Tibial artery (tissue), 4 donors: ENCODE measurements at regions of chr18 and their contacts with region 1.

Region 1: DNA sequence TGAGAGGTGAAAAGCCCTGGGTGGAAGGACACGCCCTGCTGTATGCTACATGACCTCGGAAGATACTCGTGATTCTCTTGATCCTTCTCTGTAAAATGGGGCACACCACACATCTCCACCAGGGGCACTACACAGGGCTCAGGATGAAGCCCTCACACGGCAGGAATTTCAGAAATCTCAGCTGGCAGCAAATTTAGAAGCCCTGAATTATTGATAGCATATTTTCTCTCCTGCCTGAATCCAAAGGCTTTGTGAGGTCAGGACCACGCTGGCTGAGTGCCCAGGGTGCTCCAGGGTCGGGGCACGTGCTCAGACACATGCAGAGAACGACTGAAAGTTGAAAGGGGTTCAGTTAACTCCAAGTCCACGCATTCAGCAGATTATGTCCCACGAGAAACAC is 42.1 kb upstream of the GALR1 start:
- DNase-seq: peak; percentile 66 to 80
- H3K4me3 ChIP-seq: no peak overlapping the region
- H3K27ac ChIP-seq: peak overlapping the region; percentile 71 to 81
- H3K4me1 ChIP-seq: peaks cover 4 to 45% (median 18%) of the 10 kb centered on the region in 4 donors
- H3K27me3 ChIP-seq: no peaks in the 10 kb centered on the region
- CTCF ChIP-seq: peak; percentile 40 to 52

Region 2: DNA sequence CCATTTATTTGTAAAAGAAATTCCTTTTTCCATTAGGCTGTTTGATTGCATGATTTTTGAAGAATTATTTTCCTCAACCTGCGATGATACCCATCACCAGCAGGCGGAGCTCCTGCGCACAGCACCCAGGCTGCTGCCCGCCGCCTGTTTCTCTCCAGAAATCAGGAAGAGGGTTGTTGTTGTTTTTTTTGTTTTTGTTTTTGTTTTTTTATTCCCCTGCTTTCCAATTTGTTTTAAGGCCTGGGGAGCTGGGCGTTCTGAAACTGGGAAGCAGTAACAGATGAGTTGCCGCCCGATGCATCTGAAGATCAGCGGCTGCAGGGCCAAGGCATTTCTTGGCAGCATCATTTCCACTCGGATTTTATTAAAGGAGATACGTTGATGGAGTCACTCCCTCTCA is 207.0 kb before region 1 on chr18:
- intact Hi-C with region 1: loop called (anchors 5 kb)
- DNase-seq: no peak
- H3K4me3 ChIP-seq: peak overlapping the region in 1 of 2 donors; percentile 27
- H3K27ac ChIP-seq: no peak overlapping the region
- H3K4me1 ChIP-seq: peaks cover 0 to 6% (median 0%) of the 10 kb centered on the region in 4 donors
- H3K27me3 ChIP-seq: no peaks in the 10 kb centered on the region
- CTCF ChIP-seq: peak; percentile 90 to 97

Region 3: GRCh38 chr18:77132371-77133050 is 75.0 kb before region 1 on chr18 and contains the start of gene MBP:
- intact Hi-C with region 1: loop called (anchors 5 kb)
- DNase-seq: peak in 1 of 2 donors; percentile 83
- H3K4me3 ChIP-seq: peak within 1 kb of the TSS; percentile 69 to 91
- H3K27ac ChIP-seq: peak within 1 kb of the TSS; percentile 90 to 98
- H3K4me1 ChIP-seq: peaks cover 0 to 48% (median 23%) of the 10 kb centered on the region in 4 donors
- H3K27me3 ChIP-seq: no peaks in the 10 kb centered on the region
- CTCF ChIP-seq: no peak

Region 4: GRCh38 chr18:77320971-77321559 is 113.5 kb after region 1 on chr18:
- intact Hi-C with region 1: no loop called
- DNase-seq: no peak
- H3K4me3 ChIP-seq: no peak overlapping the region
- H3K27ac ChIP-seq: no peak overlapping the region
- H3K4me1 ChIP-seq: no peaks in the 10 kb centered on the region
- H3K27me3 ChIP-seq: no peaks in the 10 kb centered on the region
- CTCF ChIP-seq: no peak